Posterior vena cava (tissue), 2 donors: ENCODE measurements at regions of chr12 and their contacts with region 1.

Region 1: DNA sequence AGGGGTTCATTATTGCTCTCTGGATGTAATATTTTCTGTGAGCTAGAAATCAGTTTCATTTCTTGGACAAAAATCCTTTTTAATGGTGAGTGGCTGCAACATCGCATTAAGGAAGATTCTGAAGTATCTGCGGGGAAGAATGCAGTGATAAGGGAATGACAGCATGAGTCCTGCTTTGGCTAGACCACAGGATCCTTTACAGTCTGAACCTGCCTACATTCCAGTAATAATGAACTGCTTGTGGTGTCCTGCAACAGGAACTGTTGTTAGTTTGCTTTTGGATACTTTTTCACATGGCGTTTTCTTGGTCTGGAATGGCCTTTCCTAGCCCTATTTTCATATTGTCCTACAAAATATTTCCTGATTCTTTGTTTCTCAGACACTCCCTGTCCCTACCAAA is 15.7 kb downstream of the MDM2 start:
- DNase-seq: no peak

Region 2: DNA sequence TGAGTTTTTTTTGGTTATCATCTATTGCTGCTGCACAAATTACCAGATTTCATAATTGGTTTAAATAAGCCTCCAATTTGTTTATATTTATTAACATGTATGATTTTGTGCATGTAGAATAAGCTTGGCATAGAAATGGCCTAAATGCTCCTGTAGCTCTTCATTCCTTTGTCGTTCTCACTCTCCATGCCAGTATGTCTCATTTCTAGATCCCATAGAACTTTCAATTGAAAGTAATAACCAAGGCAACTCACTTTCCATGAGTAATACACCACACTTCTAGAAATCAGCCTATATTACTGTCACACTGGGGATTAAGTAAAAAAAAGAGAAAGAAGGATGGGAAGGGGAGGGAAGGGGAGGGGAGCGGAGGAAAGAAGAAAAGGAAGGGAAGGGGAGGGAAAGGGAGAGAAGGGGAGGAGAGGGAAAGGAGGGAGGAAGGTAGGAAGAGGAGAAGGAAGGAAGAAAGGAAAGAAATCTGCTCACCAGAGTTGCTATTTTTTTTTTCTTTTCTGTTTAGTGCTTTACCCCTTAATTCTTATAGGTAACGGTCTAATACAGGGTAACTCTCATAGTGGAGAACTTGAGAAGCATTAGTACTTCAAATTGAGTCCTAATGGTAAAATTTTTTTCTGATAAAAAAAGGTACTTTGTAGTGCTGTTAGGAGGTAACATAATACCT is 29.8 kb after region 1 on chr12:
- intact Hi-C with region 1: loop called in 1 of 2 experiments (anchors 1 kb)
- DNase-seq: no peak